CD8-positive, alpha-beta T cell (primary cell): ENCODE measurements at regions of chr1 and their contacts with region 1.

Region 1: DNA sequence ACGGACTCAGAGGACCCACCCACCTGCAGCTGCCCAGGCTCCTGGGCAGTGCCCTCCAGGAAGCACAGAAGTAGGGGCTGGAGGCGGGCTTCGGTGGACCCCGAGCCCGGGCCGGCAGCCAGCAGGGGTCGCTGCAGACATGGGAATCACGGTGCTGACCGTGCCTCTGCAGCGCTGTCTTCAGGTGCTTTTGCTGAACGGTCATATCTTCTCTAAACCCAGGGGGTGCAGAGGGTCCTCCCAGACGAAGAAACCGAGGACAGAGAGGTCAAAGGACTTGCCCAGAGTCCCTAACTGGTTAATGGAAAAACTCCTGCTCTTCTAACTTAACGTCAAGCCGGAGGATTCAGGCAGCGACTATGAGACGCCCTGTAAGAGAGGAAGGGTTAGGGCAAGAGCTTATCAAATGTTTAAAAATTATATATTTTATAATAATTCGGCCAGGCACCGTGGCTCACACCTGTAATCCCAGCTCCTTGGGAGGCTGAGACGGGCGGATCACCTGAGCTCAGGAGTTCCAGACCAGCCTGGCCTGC is 21.5 kb upstream of the LEFTY2 start:
- DNase-seq: peak; percentile 28 to 78 (median 65)
- ATAC-seq: peak; percentile 64
- H3K4me3 ChIP-seq: no peak overlapping the region
- H3K4me3 Mint-ChIP-seq: no peak overlapping the region
- H3K27ac ChIP-seq: no peak overlapping the region
- H3K27ac Mint-ChIP-seq: no peak overlapping the region
- H3K4me1 ChIP-seq: peaks cover 21% of the 10 kb centered on the region
- H3K4me1 Mint-ChIP-seq: peaks cover 3% of the 10 kb centered on the region
- H3K27me3 ChIP-seq: peaks cover 0 to 3% of the 10 kb centered on the region in 2 experiments
- H3K27me3 Mint-ChIP-seq: no peaks in the 10 kb centered on the region
- CTCF ChIP-seq: peak; percentile 78

Region 2: GRCh38 chr1:225950905-225951497 is 11.5 kb before region 1 on chr1:
- CTCF ChIA-PET with region 1: interaction called, 12 read pairs
- POLR2A ChIA-PET with region 1: no interaction called
- intact Hi-C with region 1: no loop called
- DNase-seq: no peak
- ATAC-seq: no peak
- H3K4me3 ChIP-seq: no peak overlapping the region
- H3K4me3 Mint-ChIP-seq: no peak overlapping the region
- H3K27ac ChIP-seq: no peak overlapping the region
- H3K27ac Mint-ChIP-seq: no peak overlapping the region
- H3K4me1 ChIP-seq: no peaks in the 10 kb centered on the region
- H3K4me1 Mint-ChIP-seq: no peaks in the 10 kb centered on the region
- H3K27me3 ChIP-seq: no peaks in the 10 kb centered on the region
- H3K27me3 Mint-ChIP-seq: peaks cover 15% of the 10 kb centered on the region
- CTCF ChIP-seq: no peak

Region 3: DNA sequence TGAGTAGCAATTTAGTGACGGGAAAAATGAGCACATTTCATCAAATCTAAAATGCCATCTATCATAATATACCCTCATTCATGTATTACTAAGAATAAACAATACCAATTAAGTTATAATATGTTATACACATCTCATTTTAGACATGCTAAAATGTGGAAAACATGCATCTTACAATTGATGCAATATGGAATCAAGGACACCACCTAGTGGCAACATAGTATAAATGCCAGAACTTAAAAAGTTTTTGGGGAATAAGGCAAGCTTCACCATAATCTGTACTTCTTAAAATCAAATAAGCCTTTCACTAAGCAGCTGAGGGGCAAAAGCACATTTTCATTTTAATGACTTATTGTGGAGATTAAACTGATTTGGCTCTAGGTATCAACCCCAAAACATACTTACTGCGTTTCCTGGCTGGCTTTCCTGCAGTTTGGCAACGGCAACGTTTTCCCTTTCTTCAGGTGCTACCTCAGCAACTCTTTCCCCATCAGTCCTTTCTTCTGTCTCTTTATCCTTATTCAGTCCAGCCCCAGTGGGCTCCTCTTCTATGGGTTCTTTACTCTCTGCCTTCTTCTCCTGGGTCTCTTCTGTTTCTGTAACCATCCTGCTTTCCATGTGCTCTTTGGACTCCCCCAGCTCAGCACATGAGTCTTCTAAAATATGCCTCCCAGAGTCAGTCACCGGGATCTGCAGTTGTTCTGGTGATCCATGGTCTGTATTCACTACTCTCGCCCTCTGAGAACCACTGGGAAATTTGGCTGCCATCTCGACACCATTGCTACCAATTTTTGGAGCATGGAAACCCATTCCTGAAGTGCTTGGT is 25.2 kb after region 1 on chr1:
- CTCF ChIA-PET with region 1: interaction called, 10 read pairs
- POLR2A ChIA-PET with region 1: no interaction called
- intact Hi-C with region 1: no loop called
- DNase-seq: peak in 2 of 9 experiments; percentile 53 to 66
- ATAC-seq: peak; percentile 79
- H3K4me3 ChIP-seq: no peak overlapping the region
- H3K4me3 Mint-ChIP-seq: no peak overlapping the region
- H3K27ac ChIP-seq: no peak overlapping the region
- H3K27ac Mint-ChIP-seq: peak overlapping the region; percentile 30
- H3K4me1 ChIP-seq: peaks cover 9% of the 10 kb centered on the region
- H3K4me1 Mint-ChIP-seq: peaks cover 28% of the 10 kb centered on the region
- H3K27me3 ChIP-seq: no peaks in the 10 kb centered on the region
- H3K27me3 Mint-ChIP-seq: no peaks in the 10 kb centered on the region
- CTCF ChIP-seq: peak; percentile 74

Region 4: GRCh38 chr1:226062558-226063223 is 100.2 kb after region 1 on chr1 and contains the start of gene H3-3A:
- CTCF ChIA-PET with region 1: no interaction called
- POLR2A ChIA-PET with region 1: no interaction called
- intact Hi-C with region 1: no loop called
- DNase-seq: peak; percentile 96 to 99 (median 98)
- ATAC-seq: peak; percentile 85
- H3K4me3 ChIP-seq: peak within 1 kb of the TSS; percentile 84 to 92
- H3K4me3 Mint-ChIP-seq: peak within 1 kb of the TSS; percentile 100
- H3K27ac ChIP-seq: peak within 1 kb of the TSS; percentile 90 to 91
- H3K27ac Mint-ChIP-seq: peak within 1 kb of the TSS; percentile 100
- H3K4me1 ChIP-seq: peaks cover 42% of the 10 kb centered on the region
- H3K4me1 Mint-ChIP-seq: peaks cover 49% of the 10 kb centered on the region
- H3K27me3 ChIP-seq: no peaks in the 10 kb centered on the region
- H3K27me3 Mint-ChIP-seq: no peaks in the 10 kb centered on the region
- CTCF ChIP-seq: no peak
- total RNA-seq, gene H3-3A: 439 to 447 TPM

Region 5: DNA sequence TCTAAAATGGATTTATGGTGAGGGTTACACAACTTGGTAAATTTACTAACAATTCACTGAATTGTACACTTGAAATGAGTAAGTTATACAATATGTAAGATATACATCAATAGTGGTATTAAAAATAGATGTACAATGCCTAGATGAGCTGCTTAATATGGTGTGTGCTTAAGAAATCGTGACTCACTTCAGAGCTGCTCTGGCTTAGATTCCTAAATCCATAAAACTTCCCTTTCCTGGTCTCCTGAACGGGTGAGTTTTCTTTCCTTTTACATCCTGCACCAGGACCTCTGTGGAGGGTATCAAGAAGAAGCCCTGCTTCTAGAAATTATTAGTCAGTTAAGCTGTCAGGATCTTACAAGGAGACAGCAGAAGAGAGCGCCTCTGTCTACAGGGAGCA is 130.5 kb after region 1 on chr1:
- CTCF ChIA-PET with region 1: no interaction called
- POLR2A ChIA-PET with region 1: no interaction called
- intact Hi-C with region 1: no loop called
- DNase-seq: no peak
- ATAC-seq: no peak
- H3K4me3 ChIP-seq: no peak overlapping the region
- H3K4me3 Mint-ChIP-seq: no peak overlapping the region
- H3K27ac ChIP-seq: no peak overlapping the region
- H3K27ac Mint-ChIP-seq: no peak overlapping the region
- H3K4me1 ChIP-seq: no peaks in the 10 kb centered on the region
- H3K4me1 Mint-ChIP-seq: no peaks in the 10 kb centered on the region
- H3K27me3 ChIP-seq: peaks cover 0 to 3% of the 10 kb centered on the region in 2 experiments
- H3K27me3 Mint-ChIP-seq: peaks cover 3% of the 10 kb centered on the region
- CTCF ChIP-seq: no peak

Region 6: DNA sequence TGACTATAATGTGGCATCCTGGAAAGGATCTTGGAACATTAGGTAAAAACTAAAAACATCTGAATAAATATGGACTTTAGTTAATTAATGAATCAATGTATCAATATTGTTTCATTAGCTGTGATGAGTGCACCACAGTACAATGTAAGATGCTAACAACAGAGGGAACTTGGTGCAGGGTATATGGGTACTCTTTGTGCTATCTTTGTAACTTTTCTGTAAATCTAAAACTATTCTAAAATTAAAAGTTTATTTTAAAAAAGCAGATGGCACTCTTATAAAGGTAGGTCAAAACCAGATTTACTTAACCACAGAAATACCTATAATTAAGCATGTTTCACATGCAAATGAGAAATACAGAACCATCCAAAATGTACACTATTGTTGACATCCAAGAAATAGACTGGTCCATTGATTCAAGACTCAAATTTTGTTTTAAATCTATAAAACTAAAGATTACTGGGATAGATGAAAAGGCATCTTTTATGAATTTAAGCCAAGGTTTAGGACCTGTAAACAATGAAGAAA is 185.7 kb after region 1 on chr1:
- CTCF ChIA-PET with region 1: no interaction called
- POLR2A ChIA-PET with region 1: no interaction called
- intact Hi-C with region 1: no loop called
- DNase-seq: no peak
- ATAC-seq: no peak
- H3K4me3 ChIP-seq: no peak overlapping the region
- H3K4me3 Mint-ChIP-seq: no peak overlapping the region
- H3K27ac ChIP-seq: no peak overlapping the region
- H3K27ac Mint-ChIP-seq: peak overlapping the region; percentile 9
- H3K4me1 ChIP-seq: no peaks in the 10 kb centered on the region
- H3K4me1 Mint-ChIP-seq: no peaks in the 10 kb centered on the region
- H3K27me3 ChIP-seq: no peaks in the 10 kb centered on the region
- H3K27me3 Mint-ChIP-seq: no peaks in the 10 kb centered on the region
- CTCF ChIP-seq: no peak

Region 7: GRCh38 chr1:226162898-226163297 is 200.4 kb after region 1 on chr1:
- CTCF ChIA-PET with region 1: no interaction called
- POLR2A ChIA-PET with region 1: no interaction called
- intact Hi-C with region 1: no loop called
- DNase-seq: no peak
- ATAC-seq: no peak
- H3K4me3 ChIP-seq: no peak overlapping the region
- H3K4me3 Mint-ChIP-seq: no peak overlapping the region
- H3K27ac ChIP-seq: no peak overlapping the region
- H3K27ac Mint-ChIP-seq: no peak overlapping the region
- H3K4me1 ChIP-seq: no peaks in the 10 kb centered on the region
- H3K4me1 Mint-ChIP-seq: peaks cover 13% of the 10 kb centered on the region
- H3K27me3 ChIP-seq: no peaks in the 10 kb centered on the region
- H3K27me3 Mint-ChIP-seq: no peaks in the 10 kb centered on the region
- CTCF ChIP-seq: no peak